ENCODE measurements at regions of chr19 and their contacts with region 1.

Region 1: GRCh38 chr19:2950286-2951124 is 5.7 kb upstream of the ZNF77 start:
- DNase-seq: peak; percentile 98
- H3K4me3 ChIP-seq: peak overlapping the region; percentile 71 to 76 (median 75)
- H3K27ac ChIP-seq: peak overlapping the region; percentile 69
- H3K4me1 ChIP-seq: peaks cover 6% of the 10 kb centered on the region
- H3K27me3 ChIP-seq: no peaks in the 10 kb centered on the region
- CTCF ChIP-seq: no peak

Region 2: GRCh38 chr19:2648528-2648937 is 302.0 kb before region 1 on chr19:
- CTCF ChIA-PET with region 1: interaction called, 5 read pairs
- dilution Hi-C with region 1: no loop called
- in situ Hi-C with region 1: no loop called
- intact Hi-C with region 1: loop called (anchors 1 kb)
- DNase-seq: peak; percentile 62
- H3K4me3 ChIP-seq: no peak overlapping the region
- H3K27ac ChIP-seq: no peak overlapping the region
- H3K4me1 ChIP-seq: no peaks in the 10 kb centered on the region
- H3K27me3 ChIP-seq: no peaks in the 10 kb centered on the region
- CTCF ChIP-seq: peak; percentile 84 to 95

Region 3: DNA sequence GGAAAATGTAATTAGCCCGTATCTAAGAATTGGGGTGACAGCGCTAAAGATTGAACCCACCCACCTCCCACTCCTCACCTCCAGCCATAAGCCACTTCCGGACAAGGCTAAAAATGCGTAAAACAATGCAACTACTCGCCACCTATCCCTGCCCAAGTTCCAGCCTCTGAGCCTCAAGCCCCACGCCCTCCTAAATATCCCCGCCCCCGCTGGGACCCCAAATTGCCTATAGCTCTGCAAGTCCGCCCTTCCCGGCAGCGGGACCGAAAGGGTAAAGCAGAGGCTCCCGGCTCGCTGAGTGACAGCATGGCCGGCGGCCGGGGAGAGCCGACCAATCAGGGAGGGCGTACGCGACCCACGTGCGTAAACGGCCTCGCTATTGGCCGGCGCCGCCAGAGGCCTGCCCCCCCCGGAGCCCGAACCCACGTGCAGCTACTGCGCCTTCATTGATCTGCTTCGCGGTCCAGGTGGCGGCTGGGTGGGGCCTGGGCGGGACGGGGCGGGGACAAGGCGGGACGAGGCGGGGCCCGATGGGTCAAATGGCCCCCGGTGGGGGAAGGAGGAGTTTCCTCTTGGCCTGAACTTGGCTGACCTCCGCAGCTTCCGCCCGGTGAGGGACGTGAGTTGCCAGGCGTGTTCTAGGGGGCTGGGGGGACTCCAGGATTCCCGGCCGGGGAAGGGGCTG is 26.6 kb after region 1 on chr19 and contains the start of gene TLE6:
- CTCF ChIA-PET with region 1: interaction called, 14 read pairs
- dilution Hi-C with region 1: no loop called
- in situ Hi-C with region 1: no loop called
- intact Hi-C with region 1: no loop called
- DNase-seq: peak; percentile 94
- H3K4me3 ChIP-seq: peak within 1 kb of the TSS; percentile 61 to 80 (median 62)
- H3K27ac ChIP-seq: no peak within 1 kb of the TSS
- H3K4me1 ChIP-seq: peaks cover 11% of the 10 kb centered on the region
- H3K27me3 ChIP-seq: no peaks in the 10 kb centered on the region
- CTCF ChIP-seq: no peak
- total RNA-seq, gene TLE6: 0.33 to 1.6 TPM

Region 4: DNA sequence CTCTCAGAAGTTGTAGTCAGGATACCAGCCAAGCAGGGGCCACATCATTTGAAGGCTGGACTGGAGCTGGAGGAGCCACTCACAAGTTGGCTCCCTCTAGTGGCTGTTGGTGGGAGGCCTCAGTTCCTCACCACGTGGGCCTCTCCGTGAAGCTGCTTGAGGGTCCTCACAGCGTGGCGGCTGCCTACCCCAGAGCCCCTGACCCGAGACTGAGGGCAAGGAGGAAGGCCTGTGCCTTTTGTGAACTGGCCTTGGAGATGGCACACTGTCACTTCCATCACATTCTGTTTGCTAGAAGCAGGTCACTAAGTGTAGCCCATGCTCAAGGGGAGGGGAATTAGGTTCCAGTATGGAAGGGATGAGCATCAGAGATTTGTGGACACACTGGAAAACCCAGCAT is 158.3 kb after region 1 on chr19:
- CTCF ChIA-PET with region 1: interaction called, 3 read pairs
- dilution Hi-C with region 1: no loop called
- in situ Hi-C with region 1: loop called in 1 of 2 experiments (anchors 10 kb)
- intact Hi-C with region 1: loop called (anchors 2 kb)
- DNase-seq: peak; percentile 36
- H3K4me3 ChIP-seq: no peak overlapping the region
- H3K27ac ChIP-seq: no peak overlapping the region
- H3K4me1 ChIP-seq: no peaks in the 10 kb centered on the region
- H3K27me3 ChIP-seq: no peaks in the 10 kb centered on the region
- CTCF ChIP-seq: peak; percentile 73 to 83

Region 5: DNA sequence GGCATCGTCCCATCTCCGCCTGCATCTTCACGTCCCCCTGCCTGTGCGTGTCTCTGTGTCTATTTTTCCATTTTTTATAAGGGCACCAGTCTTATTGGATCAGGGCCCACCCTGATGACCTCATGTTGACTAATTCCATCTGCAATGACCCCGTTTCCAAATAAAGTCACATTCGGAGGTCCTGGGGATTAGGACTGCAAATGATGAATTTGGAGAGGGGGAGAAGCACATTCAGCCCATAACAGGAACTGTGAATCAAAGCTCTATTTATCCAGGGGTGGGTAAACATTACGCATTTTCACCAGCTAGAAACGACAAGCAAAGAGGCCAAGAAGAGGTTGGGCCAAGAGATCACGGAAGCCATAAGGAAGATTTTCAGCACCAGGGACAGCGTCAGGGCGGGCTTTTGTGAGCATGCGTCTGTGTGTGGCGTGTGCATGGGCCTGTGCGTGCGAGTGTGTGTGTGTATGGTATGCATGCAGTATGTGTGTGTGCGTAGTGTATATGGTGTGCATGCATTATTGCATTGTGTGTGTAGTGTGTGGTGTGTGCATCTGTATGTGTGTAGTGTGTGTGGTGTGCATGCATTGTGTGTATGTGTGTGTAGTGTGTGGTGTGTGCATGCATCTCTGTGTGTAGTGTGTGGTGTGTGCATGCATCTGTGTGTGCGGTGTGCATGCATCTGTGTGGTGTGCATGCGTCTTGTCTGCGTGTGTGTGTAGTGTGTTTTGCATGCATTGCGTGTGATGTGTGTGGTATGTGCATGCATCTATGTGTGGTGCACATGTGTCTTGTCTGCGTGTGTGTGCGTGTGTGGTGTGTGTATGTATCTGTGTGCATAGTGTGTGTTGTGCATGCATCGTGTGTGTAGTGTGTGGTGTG is 293.6 kb after region 1 on chr19:
- CTCF ChIA-PET with region 1: no interaction called
- dilution Hi-C with region 1: no loop called
- in situ Hi-C with region 1: no loop called
- intact Hi-C with region 1: no loop called
- DNase-seq: peak; percentile 45
- H3K4me3 ChIP-seq: no peak overlapping the region
- H3K27ac ChIP-seq: no peak overlapping the region
- H3K4me1 ChIP-seq: no peaks in the 10 kb centered on the region
- H3K27me3 ChIP-seq: no peaks in the 10 kb centered on the region
- CTCF ChIP-seq: no peak

Region 6: GRCh38 chr19:3471954-3472655 is 521.6 kb after region 1 on chr19:
- CTCF ChIA-PET with region 1: no interaction called
- dilution Hi-C with region 1: no loop called
- in situ Hi-C with region 1: loop called in 1 of 2 experiments (anchors 25 kb)
- intact Hi-C with region 1: loop called (anchors 5 kb)
- DNase-seq: no peak
- H3K4me3 ChIP-seq: no peak overlapping the region
- H3K27ac ChIP-seq: no peak overlapping the region
- H3K4me1 ChIP-seq: no peaks in the 10 kb centered on the region
- H3K27me3 ChIP-seq: no peaks in the 10 kb centered on the region
- CTCF ChIP-seq: peak; percentile 53 to 85

Measured in mammary epithelial cell (primary cell).